Colonic mucosa (tissue), 4 donors: ENCODE measurements at regions of chr6 and their contacts with region 1.

Region 1: DNA sequence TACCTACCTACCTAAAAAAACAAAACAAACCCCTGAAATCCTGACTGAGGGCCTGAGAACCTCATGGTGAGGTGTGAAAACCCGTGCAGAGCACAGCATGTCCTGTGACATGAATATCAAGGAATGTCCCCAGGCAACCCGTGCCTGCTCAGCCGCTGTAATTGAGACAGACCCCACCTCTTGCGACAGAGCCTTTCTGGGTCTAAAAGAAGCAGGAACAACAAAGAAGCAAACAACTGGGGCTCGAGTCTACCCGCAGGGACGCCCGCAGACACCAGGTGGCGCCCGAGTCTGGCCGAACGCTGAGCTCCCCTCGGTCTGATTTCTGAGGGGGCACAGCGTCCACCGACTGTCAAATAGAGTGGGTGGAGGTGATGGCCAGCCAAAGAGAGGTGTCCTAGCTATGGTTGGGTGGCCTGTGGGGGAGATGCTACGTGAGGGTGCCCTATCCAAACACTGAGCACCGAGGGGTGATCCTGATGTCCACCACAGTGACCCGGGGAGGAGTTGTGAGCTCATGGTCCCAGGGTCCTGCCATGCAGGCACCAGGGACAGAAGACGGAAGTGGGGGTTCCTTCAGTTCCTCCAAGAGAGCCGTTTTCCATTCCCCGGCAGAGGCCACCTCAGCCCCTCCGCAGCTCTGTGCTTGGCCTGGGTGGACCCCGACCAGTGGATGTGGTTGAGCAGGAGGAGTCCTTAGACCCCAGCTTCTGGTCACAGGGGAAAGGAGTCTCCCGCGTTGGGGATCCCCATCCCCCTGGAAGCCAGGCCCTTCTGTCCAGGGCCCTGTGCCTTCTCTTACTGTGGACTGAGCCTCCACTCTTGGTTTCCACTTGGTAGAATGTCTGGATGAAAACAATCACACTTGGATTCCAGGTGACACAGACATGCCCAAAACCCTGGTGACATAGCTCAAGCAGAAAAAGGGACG is 268.2 kb downstream of the CDC5L start:
- DNase-seq: peak; percentile 69
- H3K4me3 ChIP-seq: no peak overlapping the region
- H3K27ac ChIP-seq: no peak overlapping the region
- H3K4me1 ChIP-seq: no peaks in the 10 kb centered on the region
- H3K27me3 ChIP-seq: no peaks in the 10 kb centered on the region
- CTCF ChIP-seq: peak; percentile 97

Region 2: GRCh38 chr6:43541774-43542471 is 1113.8 kb before region 1 on chr6:
- intact Hi-C with region 1: no loop called
- DNase-seq: no peak
- H3K4me3 ChIP-seq: no peak overlapping the region
- H3K27ac ChIP-seq: no peak overlapping the region
- H3K4me1 ChIP-seq: no peaks in the 10 kb centered on the region
- H3K27me3 ChIP-seq: no peaks in the 10 kb centered on the region
- CTCF ChIP-seq: no peak

Region 3: DNA sequence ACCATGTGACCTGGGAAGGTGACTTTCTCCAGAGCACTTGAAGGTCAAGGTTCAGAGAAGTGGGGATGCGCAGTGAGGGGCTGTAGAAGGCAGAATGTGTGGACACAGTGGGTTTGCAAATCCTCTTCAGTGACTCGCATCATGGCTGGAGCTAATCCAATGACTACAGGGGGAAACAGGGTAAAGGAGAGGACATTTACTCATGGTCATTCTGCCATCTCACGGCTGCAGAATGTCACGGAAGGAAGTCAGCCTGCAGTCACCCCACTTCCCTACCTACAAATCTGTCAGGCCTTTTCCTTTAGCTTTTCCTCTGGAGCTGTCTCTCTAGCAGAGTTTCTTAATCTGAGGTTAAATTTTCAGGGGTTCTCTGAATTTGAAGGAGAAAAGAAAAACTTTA is 69.4 kb after region 1 on chr6:
- intact Hi-C with region 1: no loop called
- DNase-seq: no peak
- H3K4me3 ChIP-seq: no peak overlapping the region
- H3K27ac ChIP-seq: no peak overlapping the region
- H3K4me1 ChIP-seq: no peaks in the 10 kb centered on the region
- H3K27me3 ChIP-seq: no peaks in the 10 kb centered on the region
- CTCF ChIP-seq: no peak

Region 4: GRCh38 chr6:45419571-45420082 is 764.0 kb after region 1 on chr6:
- intact Hi-C with region 1: loop called (anchors 10 kb)
- DNase-seq: peak; percentile 53
- H3K4me3 ChIP-seq: peak overlapping the region; percentile 16
- H3K27ac ChIP-seq: no peak overlapping the region
- H3K4me1 ChIP-seq: peaks cover 5% of the 10 kb centered on the region
- H3K27me3 ChIP-seq: peaks cover 42% of the 10 kb centered on the region
- CTCF ChIP-seq: peak; percentile 24